Sciatic nerve (tissue), 2 donors: ENCODE measurements at regions of chr9 and their contacts with region 1.

Region 1: DNA sequence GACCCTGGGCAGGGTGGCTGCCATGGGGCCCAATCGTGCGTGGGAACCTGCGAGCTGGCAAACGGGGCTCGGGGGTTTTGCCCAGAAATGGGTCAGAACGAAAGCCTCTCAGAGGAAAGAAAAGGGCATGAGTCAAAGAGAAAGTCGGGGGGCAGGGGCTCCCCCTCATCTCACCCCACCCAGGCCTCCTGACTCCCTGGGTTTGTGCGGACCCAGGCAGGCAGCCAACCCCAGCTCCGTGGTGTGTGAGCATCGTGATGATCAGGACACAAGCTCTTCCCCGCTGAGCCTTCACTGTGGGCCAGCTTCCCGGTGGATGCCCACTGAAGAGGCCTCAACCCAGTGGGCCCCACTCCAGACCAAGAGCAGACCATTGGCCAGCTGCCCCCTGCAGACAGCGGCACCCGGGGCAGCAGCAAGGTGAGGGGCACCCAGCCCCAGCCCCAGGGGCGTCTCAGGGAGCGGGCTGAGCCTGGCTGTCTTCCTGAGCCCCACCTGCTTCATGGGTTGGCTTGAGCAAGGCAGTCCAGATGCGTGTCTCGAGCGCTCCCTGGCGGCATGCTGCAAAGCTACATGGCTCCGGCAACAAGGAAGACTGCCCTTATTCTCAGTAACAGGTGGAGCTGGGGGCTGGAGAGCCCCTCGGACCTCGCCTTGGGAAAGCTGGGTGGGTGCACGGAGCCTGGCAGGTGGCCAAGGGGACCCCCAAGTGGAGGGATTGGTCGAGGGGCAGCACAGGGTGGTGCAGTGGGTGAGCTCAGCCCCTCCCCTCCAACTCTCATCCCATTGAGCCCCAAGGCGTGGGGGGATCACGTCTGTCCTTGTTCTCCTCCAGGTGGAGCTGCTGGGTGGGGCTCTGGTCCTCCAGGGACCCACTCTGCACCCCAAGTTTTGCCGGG is 3.2 kb upstream of the FUT7 start:
- DNase-seq: peak; percentile 90
- ATAC-seq: peak; percentile 81

Region 2: DNA sequence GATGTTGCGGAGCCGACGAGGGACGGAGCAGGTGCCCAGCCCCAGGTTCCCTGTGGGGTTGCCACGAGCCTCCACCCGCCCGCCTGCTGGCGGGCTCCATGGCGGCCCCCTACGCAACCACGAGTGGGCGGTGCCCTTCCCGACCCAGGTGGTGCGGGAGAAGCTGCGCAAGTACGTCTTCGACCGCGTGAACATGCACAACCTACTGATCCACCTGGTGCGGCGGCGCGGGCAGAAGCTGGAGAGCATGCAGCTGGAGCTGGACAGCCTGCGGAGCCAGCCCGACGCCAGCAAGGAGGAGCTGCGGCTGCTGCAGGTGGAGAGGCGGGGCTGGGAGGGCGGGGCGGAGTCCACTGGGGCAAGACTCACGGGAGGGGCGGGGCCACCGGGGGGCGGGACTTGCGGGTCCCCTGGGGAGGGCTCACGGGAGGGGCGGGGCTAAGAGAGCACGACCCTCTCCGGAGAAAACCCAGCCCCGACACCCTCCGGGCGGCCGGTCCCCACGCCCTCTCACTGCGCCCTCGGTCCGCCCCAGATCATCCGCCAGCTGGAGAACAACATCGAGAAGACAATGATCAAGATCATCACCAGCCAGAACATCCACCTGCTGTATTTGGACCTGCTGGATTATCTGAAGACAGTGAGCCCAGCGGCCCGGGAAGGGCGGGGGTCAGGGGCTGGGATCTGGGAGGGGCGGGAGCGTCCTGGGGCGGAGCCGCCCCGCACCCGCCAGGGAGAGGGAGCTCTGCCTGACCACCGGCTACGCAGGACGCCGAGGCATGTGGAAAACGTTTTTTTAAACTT is 235.1 kb before region 1 on chr9:
- intact Hi-C with region 1: loop called (anchors 5 kb)
- DNase-seq: peak; percentile 80
- ATAC-seq: peak; percentile 63

Region 3: GRCh38 chr9:136944519-136945279 is 90.4 kb before region 1 on chr9 and contains the starts of genes C8G and FBXW5:
- intact Hi-C with region 1: loop called (anchors 5 kb)
- DNase-seq: peak; percentile 96
- ATAC-seq: peak; percentile 84
- total RNA-seq, gene C8G: not detected
- total RNA-seq, gene FBXW5: 59.9 TPM